ENCODE measurements at regions of chr5 and their contacts with region 1.

Region 1: DNA sequence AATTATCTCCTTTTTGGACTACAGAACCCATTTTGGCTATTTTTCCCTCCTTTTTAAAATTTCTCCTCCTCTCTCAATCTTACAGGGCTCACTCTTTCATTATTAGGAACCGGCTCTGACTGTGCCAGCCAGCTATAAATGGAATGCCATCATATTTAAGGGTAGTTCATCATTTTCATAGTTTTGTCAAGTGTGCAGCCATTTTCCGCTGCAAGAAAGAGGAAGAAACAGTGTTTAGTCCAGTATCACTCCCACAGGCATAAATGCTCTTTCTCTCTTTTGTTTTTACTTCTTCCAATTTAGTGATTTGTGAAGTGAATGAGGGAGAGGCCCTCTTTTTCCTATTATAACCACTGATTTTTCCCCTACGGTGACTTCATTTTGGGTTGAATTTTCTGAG is 290.0 kb downstream of the NR3C1 start:
- DNase-seq: no peak
- ATAC-seq: no peak
- H3K4me3 Mint-ChIP-seq: no peak overlapping the region
- H3K27ac Mint-ChIP-seq: no peak overlapping the region
- H3K4me1 Mint-ChIP-seq: peaks cover 17% of the 10 kb centered on the region
- H3K27me3 Mint-ChIP-seq: no peaks in the 10 kb centered on the region
- CTCF ChIP-seq: no peak

Region 2: DNA sequence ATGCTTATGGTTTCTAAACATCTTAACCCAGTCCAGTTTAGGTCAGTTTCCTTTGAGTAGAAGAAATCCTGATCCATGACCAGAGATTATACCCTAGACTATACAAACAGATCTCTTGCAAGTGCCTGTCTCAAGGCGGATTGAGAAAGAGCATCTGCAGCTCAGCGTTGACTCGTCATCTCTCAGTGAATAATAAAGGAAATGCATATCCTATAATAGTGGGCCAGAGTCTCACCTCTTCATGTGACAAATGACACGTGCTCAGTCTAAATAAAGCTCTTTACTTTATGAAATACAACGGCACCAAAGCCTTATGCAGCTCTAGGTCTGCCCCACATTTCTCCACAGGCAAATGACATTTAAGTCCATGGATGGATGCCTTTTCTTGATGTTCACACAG is 469.4 kb after region 1 on chr5:
- CTCF ChIA-PET with region 1: no interaction called
- POLR2A ChIA-PET with region 1: interaction called, 13 read pairs
- intact Hi-C with region 1: no loop called
- DNase-seq: no peak
- ATAC-seq: peak; percentile 34
- H3K4me3 Mint-ChIP-seq: peak overlapping the region; percentile 2
- H3K27ac Mint-ChIP-seq: peak overlapping the region; percentile 38
- H3K4me1 Mint-ChIP-seq: peaks cover 36% of the 10 kb centered on the region
- H3K27me3 Mint-ChIP-seq: no peaks in the 10 kb centered on the region
- CTCF ChIP-seq: no peak

Region 3: DNA sequence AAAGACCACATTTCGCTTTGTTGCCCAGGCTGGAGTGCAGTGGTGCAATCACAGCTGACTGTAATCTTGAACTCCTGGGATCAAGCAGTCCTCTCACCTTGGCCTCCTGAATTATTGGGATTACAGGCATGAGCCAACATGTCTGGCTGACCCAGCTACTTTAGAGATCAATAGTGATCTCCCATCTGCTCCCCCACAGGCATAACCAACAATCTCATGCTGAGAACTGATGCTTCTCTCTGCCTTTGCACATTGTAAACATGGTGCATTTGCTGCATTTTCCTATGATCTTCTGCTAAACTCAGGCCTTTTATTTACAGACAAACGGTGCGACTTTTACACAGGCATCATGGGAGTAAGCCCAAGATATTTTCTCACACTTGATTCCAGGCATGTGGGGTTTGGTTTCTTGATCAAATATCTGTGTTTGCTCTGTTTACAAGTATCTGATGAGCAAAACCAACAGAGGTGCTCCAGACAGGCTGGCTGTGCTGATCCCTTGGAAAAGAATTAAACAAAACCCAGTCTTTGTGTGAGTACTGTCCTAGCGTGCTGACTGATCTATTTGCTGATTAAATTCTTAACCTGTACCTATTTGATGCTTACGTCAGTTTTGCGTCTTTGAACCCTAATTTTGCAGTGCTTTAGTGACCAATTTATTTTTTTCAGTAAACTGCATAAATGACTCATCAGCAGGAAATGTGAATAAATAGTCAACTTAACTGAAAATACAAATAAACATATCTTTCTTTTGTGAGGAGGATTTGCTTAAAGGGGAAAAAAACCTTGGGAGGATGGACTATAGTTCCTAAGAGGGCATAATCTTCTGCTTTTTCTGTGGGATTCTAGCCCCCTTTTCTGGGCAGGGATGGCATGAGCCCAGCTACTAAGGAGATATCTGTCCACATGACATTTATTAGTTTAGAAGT is 481.7 kb after region 1 on chr5:
- CTCF ChIA-PET with region 1: no interaction called
- POLR2A ChIA-PET with region 1: no interaction called
- intact Hi-C with region 1: no loop called
- DNase-seq: no peak
- ATAC-seq: no peak
- H3K4me3 Mint-ChIP-seq: no peak overlapping the region
- H3K27ac Mint-ChIP-seq: no peak overlapping the region
- H3K4me1 Mint-ChIP-seq: peaks cover 32% of the 10 kb centered on the region
- H3K27me3 Mint-ChIP-seq: no peaks in the 10 kb centered on the region
- CTCF ChIP-seq: no peak

Region 4: DNA sequence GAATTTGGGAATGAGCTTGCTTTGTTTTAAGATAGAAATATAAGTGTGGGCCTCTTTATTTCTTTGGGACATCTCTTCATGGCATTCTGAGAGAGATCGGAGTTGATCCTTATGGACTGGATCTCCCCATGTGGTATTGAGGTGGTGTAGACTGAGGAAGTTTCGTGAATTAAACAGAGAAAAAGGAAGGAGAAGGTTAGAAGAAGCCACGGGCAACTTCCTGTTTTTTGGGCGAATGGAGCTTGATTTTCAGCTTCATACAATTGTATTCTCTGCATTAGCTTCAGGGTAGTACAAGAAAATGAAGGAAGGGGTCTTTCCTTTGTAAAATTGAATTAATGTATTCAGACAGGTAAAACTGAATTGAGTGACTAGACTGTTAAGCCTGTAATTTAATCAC is 628.0 kb after region 1 on chr5:
- CTCF ChIA-PET with region 1: no interaction called
- POLR2A ChIA-PET with region 1: no interaction called
- intact Hi-C with region 1: no loop called
- DNase-seq: no peak
- ATAC-seq: no peak
- H3K4me3 Mint-ChIP-seq: no peak overlapping the region
- H3K27ac Mint-ChIP-seq: no peak overlapping the region
- H3K4me1 Mint-ChIP-seq: peaks cover 6% of the 10 kb centered on the region
- H3K27me3 Mint-ChIP-seq: no peaks in the 10 kb centered on the region
- CTCF ChIP-seq: no peak

Measured in activated B cell treated with CpG ODN at 0.5 μM for 24 hours (primary cell).